SK-N-SH (cell line): ENCODE measurements at regions of chr3 and their contacts with region 1.

Region 1: DNA sequence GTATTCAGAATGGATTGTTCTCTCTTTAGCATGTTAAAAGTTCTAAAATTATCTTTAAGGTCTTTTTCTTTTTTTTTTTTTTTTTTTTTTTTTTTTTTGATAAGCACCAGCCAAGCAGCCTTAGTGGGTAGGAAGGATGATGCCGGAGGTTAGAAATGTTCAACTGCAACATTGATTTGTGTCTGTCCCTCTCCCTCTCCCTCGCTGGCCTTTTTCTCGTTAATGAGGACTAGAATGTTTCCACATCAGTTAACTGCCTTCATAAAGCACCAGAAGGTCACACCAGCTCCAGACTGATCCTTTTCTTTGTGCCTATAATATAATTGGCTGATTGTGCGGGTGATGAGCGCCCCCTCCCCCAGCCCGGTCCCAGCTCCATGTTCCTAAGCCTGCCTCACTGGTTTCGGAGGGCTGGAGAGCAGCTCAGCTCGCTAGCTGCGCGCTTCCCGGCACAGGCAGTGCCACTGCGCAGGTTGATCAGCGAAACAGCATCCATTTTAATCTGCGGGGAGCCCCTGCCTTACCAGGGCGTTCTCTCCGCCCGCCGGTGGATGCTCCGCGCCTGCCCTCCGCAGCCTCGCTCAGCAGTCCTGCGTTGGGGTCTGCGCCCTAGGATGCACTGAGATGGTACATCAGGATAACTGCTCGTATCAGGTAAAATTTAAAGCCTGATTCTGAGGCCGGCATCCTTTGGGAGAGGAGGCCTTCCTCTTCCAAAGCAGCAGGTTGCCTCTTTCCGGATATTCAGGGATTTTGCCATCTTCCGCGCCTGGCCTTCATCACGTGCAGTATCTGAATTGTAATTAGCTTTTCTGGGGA is 148.9 kb upstream of the IL12A start:
- DNase-seq: peak; percentile 81
- H3K4me3 ChIP-seq: peak within 1 kb of the TSS; percentile 65 to 67
- H3K27ac ChIP-seq: peak within 1 kb of the TSS; percentile 47 to 99; a peak in 3 of 4 replicates
- H3K4me1 ChIP-seq: peaks cover 21 to 31% of the 10 kb centered on the region in 2 experiments; a peak in 3 of 4 replicates
- H3K27me3 ChIP-seq: no peaks in the 10 kb centered on the region
- CTCF ChIP-seq: no peak
- EP300 ChIP-seq: peak in 1 of 2 experiments; percentile 45; a peak in 1 of 4 replicates
- RAD21 ChIP-seq: peak; percentile 39

Region 2: DNA sequence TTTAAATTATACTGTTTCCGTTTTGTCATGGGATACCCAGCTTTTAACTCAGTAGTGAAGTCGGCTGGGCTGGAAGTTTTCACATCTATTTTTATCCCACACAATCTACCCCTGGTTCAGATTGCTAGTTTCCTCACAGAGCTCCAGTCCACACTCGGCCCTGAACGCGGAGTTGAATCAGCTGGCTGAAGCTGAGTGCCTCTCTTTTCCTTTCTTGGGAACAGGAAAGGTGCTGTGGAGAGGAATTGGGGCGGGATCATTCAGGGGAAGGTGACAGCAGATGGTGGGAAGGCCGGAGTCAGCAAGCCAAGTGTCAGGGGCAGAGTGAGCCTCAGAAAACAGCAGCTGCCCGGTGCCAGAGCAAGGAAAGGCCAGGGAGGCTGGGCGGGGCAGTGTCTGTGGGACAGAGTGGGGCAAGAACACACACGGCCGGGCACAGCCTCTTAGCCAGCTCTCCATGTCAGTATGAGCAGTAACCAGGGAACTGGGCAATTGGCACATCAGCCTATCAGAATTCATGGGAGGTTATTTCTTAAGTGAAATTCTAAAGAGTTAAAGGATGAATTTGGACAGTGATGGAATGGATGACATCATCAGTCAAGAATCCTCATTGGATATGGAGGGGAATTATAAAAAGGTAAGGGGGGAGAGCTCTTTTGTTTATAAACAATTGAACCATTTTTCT is 13.2 kb after region 1 on chr3:
- CTCF ChIA-PET with region 1: interaction called, 160 read pairs
- POLR2A ChIA-PET with region 1: interaction called, 34 read pairs
- DNase-seq: no peak
- H3K4me3 ChIP-seq: peak overlapping the region; percentile 39 to 53
- H3K27ac ChIP-seq: peak overlapping the region; percentile 93 to 100
- H3K4me1 ChIP-seq: peaks cover 30 to 72% of the 10 kb centered on the region in 2 experiments
- H3K27me3 ChIP-seq: no peaks in the 10 kb centered on the region
- CTCF ChIP-seq: no peak
- EP300 ChIP-seq: no peak
- RAD21 ChIP-seq: no peak

Region 3: DNA sequence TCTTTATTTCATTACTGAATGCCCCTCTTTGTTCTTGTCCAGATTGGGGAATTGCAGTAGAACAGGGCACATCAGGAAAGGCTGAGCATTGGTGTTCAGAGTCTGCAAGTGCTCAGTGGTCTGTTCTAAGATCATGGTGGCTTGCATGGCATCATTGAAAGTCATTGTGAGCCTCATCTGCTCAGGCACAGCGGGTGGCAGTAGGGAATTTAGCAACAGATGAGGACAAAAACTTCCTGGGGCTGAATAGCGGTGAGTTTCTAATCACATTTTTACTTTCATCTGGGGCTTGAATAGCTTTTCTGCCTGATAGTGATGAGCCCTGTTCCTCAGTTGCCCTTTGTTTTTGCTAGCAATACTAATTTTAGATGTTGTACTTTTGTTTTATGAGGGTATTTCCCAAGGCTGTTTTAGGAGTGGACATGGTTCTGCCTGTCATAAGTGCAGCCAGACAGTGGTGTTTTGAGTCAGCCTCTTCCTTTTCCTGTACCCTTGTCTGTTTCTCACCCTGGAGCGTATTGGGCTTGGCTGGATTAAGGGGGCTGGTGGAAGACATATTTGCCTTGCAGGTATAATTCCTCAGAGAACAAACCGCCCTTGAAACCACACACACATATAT is 21.7 kb after region 1 on chr3:
- CTCF ChIA-PET with region 1: interaction called, 160 read pairs
- POLR2A ChIA-PET with region 1: interaction called, 34 read pairs
- DNase-seq: no peak
- H3K4me3 ChIP-seq: no peak overlapping the region
- H3K27ac ChIP-seq: peak overlapping the region in 1 of 2 experiments; percentile 87; a peak in 2 of 4 replicates
- H3K4me1 ChIP-seq: peaks cover 20 to 76% of the 10 kb centered on the region in 2 experiments
- H3K27me3 ChIP-seq: no peaks in the 10 kb centered on the region
- CTCF ChIP-seq: no peak
- EP300 ChIP-seq: no peak
- RAD21 ChIP-seq: no peak